Caki2 (cell line): ENCODE measurements at regions of chr16 and their contacts with region 1.

Region 1: DNA sequence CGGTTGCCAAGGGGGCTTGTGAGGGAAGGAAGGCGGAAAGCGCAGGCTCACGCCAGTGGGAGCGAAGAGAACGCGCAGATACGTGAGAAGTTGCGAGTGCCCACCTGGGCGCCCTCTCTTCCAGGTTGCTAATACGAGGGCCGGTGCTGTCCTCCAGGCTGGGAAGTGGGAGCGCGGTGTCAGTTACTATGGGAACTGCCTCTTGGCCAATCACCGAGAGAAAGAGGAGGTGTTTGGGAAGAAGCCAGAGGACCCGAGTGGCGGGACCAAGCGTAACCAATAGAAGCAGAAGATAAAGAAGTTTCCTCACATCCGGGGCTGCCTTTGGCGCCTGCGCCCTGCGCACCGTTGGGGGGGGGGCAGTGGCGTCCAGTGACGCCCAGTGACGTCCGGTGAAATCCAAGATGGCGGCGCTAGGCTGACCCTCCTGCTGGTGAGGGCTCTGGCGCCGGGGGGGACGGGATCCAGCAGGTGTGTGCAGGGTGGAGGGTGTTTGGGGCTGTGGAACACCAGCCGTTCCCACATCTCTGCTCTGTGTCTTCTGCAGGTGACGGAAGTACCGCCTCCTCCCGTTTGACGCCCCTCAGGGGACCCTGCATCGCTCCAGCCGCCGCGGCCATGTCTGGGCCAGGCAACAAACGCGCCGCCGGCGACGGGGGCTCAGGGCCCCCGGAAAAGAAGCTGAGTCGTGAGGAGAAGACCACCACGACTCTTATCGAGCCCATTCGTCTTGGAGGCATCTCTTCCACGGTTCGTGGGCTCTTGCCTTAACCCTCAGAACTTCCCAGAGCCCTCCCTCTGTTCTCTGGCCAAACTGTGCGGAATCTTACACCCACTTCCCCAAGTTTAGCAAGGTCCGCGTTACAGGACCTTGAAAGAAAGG is at the starts of genes CFAP119 and RNF40:
- DNase-seq: peak; percentile 99
- total RNA-seq, gene CFAP119: 7.2 and 12.3 TPM in 2 replicates
- total RNA-seq, gene RNF40: 107 and 110 TPM in 2 replicates

Region 2: DNA sequence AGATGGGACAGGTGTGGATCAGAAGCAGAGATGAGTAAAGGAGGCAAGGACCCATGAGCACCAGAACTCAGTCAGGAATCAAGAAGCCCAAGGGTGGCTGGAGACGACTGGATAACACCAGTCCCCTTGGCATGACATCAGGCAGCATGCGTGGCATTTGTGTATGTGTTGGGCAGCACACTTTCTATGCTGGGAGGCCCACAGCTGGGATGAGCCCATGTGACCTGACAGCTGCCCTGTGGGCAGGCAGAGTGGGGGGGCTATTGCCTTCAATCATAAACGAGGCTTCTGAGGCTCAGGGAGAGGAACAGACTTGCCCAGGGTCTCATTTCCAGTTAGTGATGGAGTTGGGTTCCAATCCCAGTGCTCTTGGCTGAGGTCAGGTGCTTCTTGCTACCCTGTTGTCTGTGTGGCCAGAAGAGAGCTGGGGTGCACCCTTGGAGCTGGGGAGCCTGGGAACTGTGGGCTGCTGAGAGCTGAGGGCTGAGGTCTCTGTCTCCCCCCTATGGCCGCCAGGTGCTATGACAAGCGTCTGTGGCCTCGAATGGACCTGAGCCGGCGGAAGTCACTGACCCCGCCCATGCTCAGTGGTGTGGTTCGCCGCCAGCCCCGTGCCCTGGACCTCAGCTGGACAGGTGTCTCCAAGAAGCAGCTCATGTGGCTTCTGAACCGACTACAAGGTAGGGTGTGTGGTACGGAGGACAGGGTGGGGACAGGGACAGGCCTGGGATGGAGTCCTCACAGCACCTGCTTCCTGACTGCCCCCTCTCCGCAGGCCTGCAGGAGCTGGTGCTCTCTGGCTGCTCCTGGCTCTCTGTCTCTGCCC is 179.6 kb after region 1 on chr16:
- in situ Hi-C with region 1: loop called (anchors 25 kb)
- DNase-seq: peak; percentile 85